ENCODE measurements at regions of chrX and their contacts with region 1.

Region 1: DNA sequence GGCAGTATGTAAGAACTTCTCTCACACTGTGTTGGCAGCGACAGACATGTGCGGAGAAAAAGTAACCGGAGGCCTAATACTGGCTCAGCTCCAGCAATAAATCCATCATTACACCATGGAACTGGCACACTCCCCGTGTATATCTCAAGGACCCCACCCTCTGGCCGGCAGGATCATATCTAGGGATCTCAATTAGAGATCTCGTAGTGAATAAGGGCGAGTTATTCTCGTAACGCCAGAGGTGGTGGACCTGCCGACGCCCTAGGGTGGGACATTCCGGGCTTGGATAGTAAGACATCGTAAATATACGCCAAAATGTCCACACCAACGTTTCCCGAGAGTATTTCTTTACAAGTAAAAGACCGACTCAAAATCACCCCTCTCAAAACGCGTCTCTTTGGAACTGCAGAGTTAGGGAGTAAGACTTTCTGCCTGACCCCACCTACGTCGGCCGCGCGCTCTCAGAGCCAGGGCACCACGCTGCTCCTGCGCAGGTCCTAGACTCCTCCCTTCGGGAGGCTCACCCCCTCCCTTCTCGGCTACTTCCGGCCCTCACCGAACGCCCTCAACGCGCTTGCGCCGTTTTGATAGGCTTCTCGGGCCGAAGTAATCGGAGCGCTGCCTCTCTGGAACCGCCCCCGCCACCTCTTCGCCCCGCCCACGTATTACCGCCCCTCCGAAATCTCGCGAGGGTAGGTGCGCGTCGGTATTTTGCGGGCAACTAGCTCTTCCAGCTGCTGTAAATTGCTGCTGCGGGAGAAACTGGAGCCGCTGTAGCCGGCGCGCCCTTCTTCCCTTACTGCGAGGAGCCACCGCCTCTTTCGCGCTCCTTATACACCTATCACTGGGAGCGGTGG is at the start of gene WDR44:
- DNase-seq: peak; percentile 85 to 97 (median 91)
- ATAC-seq: peak; percentile 87
- H3K4me3 ChIP-seq: peak within 1 kb of the TSS; percentile 97
- H3K4me3 Mint-ChIP-seq: peak within 1 kb of the TSS; percentile 100
- H3K27ac ChIP-seq: peak within 1 kb of the TSS; percentile 87 to 88
- H3K27ac Mint-ChIP-seq: peak within 1 kb of the TSS; percentile 99
- H3K4me1 ChIP-seq: peaks cover 17% of the 10 kb centered on the region
- H3K4me1 Mint-ChIP-seq: peaks cover 43% of the 10 kb centered on the region
- H3K27me3 ChIP-seq: no peaks in the 10 kb centered on the region
- H3K27me3 Mint-ChIP-seq: no peaks in the 10 kb centered on the region
- CTCF ChIP-seq: no peak
- total RNA-seq, gene WDR44: 11.7 to 12.2 TPM

Region 2: GRCh38 chrX:118392716-118393115 is 47.1 kb after region 1 on chrX:
- CTCF ChIA-PET with region 1: no interaction called
- POLR2A ChIA-PET with region 1: no interaction called
- intact Hi-C with region 1: loop called in 1 of 2 experiments (anchors 10 kb)
- DNase-seq: no peak
- ATAC-seq: no peak
- H3K4me3 ChIP-seq: no peak overlapping the region
- H3K4me3 Mint-ChIP-seq: no peak overlapping the region
- H3K27ac ChIP-seq: no peak overlapping the region
- H3K27ac Mint-ChIP-seq: no peak overlapping the region
- H3K4me1 ChIP-seq: no peaks in the 10 kb centered on the region
- H3K4me1 Mint-ChIP-seq: no peaks in the 10 kb centered on the region
- H3K27me3 ChIP-seq: no peaks in the 10 kb centered on the region
- H3K27me3 Mint-ChIP-seq: no peaks in the 10 kb centered on the region
- CTCF ChIP-seq: no peak

Region 3: GRCh38 chrX:119235872-119236622 is 890.4 kb after region 1 on chrX and contains the start of gene PGRMC1:
- CTCF ChIA-PET with region 1: no interaction called
- POLR2A ChIA-PET with region 1: no interaction called
- intact Hi-C with region 1: loop called in 1 of 2 experiments (anchors 10 kb)
- DNase-seq: peak; percentile 61 to 91 (median 78)
- ATAC-seq: peak; percentile 94
- H3K4me3 ChIP-seq: peak within 1 kb of the TSS; percentile 73
- H3K4me3 Mint-ChIP-seq: peak within 1 kb of the TSS; percentile 92
- H3K27ac ChIP-seq: peak within 1 kb of the TSS in 1 of 2 donors; percentile 53
- H3K27ac Mint-ChIP-seq: peak within 1 kb of the TSS; percentile 57
- H3K4me1 ChIP-seq: peaks cover 21% of the 10 kb centered on the region
- H3K4me1 Mint-ChIP-seq: peaks cover 38% of the 10 kb centered on the region
- H3K27me3 ChIP-seq: no peaks in the 10 kb centered on the region
- H3K27me3 Mint-ChIP-seq: no peaks in the 10 kb centered on the region
- CTCF ChIP-seq: no peak
- total RNA-seq, gene PGRMC1: 14.9 to 16.0 TPM

Region 4: GRCh38 chrX:119249836-119250340 is 904.3 kb after region 1 on chrX:
- CTCF ChIA-PET with region 1: no interaction called
- POLR2A ChIA-PET with region 1: no interaction called
- intact Hi-C with region 1: no loop called
- DNase-seq: no peak
- ATAC-seq: no peak
- H3K4me3 ChIP-seq: no peak overlapping the region
- H3K4me3 Mint-ChIP-seq: no peak overlapping the region
- H3K27ac ChIP-seq: no peak overlapping the region
- H3K27ac Mint-ChIP-seq: no peak overlapping the region
- H3K4me1 ChIP-seq: no peaks in the 10 kb centered on the region
- H3K4me1 Mint-ChIP-seq: no peaks in the 10 kb centered on the region
- H3K27me3 ChIP-seq: no peaks in the 10 kb centered on the region
- H3K27me3 Mint-ChIP-seq: no peaks in the 10 kb centered on the region
- CTCF ChIP-seq: no peak

Measured in CD4-positive, alpha-beta T cell (primary cell).